Activated naive CD4-positive, alpha-beta T cell treated with anti-CD3 and anti-CD28 coated beads for 36 hours (primary cell): ENCODE measurements at regions of chr21 and their contacts with region 1.

Region 1: GRCh38 chr21:45554477-45555175 is 12.4 kb upstream of the SLC19A1 start:
- DNase-seq: peak; percentile 88
- H3K4me3 Mint-ChIP-seq: peak overlapping the region; percentile 89
- H3K27ac Mint-ChIP-seq: peak overlapping the region; percentile 91
- H3K4me1 Mint-ChIP-seq: peaks cover 27% of the 10 kb centered on the region
- H3K27me3 Mint-ChIP-seq: no peaks in the 10 kb centered on the region

Region 2: DNA sequence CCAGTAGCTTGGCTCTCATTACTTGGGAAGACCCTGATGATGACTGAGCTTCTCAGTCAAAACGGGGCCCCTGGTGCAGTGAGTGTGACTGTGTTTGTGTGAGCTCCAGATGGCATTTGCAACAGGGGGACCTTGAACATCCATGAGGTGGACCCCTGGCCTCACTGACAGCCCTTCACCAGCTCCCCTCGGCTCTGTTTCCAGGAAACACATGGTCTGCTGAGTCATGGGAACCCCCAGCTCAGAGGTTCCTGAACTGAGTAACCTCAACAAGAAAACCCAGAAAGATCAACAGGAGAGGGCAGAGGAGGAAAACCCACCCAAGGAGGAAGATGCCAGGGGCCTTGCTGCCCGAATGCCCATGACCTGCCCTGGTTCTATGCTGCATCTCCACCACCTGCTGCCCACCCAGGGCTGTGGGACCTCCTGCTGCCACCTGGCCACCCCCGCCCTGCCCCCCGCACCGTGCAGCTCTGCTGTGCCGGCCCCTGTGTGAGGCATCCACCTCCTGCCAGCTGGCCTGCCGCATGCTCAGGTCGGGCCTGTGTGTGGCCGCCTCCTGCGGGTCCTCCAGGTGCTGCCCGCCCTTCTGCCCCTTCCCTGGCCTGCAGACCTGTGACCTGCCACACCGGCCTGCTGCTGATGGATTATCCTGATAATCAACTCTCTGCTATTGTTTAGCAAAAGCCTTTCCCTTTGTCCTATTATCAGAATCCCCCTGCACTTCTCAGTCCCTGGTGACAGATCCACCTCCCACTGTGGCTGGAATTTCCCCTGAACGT is 868.4 kb before region 1 on chr21:
- CTCF ChIA-PET with region 1: no interaction called
- intact Hi-C with region 1: no loop called
- DNase-seq: peak; percentile 22
- H3K4me3 Mint-ChIP-seq: no peak overlapping the region
- H3K27ac Mint-ChIP-seq: no peak overlapping the region
- H3K4me1 Mint-ChIP-seq: peaks cover 10% of the 10 kb centered on the region
- H3K27me3 Mint-ChIP-seq: peaks cover 10% of the 10 kb centered on the region

Region 3: GRCh38 chr21:45074818-45075595 is 479.6 kb before region 1 on chr21:
- CTCF ChIA-PET with region 1: no interaction called
- intact Hi-C with region 1: loop called (anchors 2 kb)
- DNase-seq: peak; percentile 34
- H3K4me3 Mint-ChIP-seq: peak overlapping the region; percentile 84
- H3K27ac Mint-ChIP-seq: peak overlapping the region; percentile 76
- H3K4me1 Mint-ChIP-seq: peaks cover 45% of the 10 kb centered on the region
- H3K27me3 Mint-ChIP-seq: no peaks in the 10 kb centered on the region

Region 4: GRCh38 chr21:45439161-45439872 is 115.3 kb before region 1 on chr21:
- CTCF ChIA-PET with region 1: no interaction called
- intact Hi-C with region 1: no loop called
- DNase-seq: peak; percentile 90
- H3K4me3 Mint-ChIP-seq: peak overlapping the region; percentile 50
- H3K27ac Mint-ChIP-seq: no peak overlapping the region
- H3K4me1 Mint-ChIP-seq: peaks cover 3% of the 10 kb centered on the region
- H3K27me3 Mint-ChIP-seq: no peaks in the 10 kb centered on the region

Region 5: GRCh38 chr21:45478115-45478801 is 76.4 kb before region 1 on chr21:
- CTCF ChIA-PET with region 1: no interaction called
- intact Hi-C with region 1: loop called (anchors 1 kb)
- DNase-seq: peak; percentile 90
- H3K4me3 Mint-ChIP-seq: peak overlapping the region; percentile 71
- H3K27ac Mint-ChIP-seq: peak overlapping the region; percentile 94
- H3K4me1 Mint-ChIP-seq: peaks cover 30% of the 10 kb centered on the region
- H3K27me3 Mint-ChIP-seq: no peaks in the 10 kb centered on the region

Region 6: DNA sequence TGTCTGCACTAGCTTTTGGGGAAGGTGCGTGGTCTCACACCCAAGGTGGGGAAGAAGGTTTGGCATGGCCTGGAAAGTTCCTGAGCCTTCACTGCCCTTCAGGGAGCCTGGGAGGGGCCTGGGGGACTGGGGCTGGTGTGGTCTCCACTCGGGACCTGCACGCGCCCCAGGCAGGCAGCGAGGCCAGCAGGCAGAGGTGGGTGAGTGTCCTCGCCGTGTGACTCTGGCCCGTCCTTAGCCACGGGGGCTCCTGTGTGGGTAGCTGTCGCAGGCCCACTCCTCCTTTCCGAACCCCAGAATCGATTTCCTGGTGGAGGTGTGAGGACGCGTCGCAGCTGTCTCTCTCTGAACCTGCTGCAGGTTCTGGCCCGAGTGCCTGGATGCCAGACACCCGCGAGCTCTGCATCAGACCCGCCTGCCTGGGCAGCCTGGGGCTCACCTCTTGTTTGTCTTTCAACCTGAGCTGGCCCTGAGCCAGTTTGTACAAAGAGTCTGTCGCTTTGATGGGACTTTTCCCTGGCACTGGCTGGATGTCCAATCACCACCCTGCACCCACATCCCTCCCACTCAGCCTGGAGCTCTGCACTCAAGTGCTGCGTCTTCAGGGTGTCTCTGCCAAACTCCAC is 23.7 kb after region 1 on chr21:
- CTCF ChIA-PET with region 1: no interaction called
- intact Hi-C with region 1: no loop called
- DNase-seq: no peak
- H3K4me3 Mint-ChIP-seq: no peak overlapping the region
- H3K27ac Mint-ChIP-seq: no peak overlapping the region
- H3K4me1 Mint-ChIP-seq: no peaks in the 10 kb centered on the region
- H3K27me3 Mint-ChIP-seq: no peaks in the 10 kb centered on the region

Region 7: DNA sequence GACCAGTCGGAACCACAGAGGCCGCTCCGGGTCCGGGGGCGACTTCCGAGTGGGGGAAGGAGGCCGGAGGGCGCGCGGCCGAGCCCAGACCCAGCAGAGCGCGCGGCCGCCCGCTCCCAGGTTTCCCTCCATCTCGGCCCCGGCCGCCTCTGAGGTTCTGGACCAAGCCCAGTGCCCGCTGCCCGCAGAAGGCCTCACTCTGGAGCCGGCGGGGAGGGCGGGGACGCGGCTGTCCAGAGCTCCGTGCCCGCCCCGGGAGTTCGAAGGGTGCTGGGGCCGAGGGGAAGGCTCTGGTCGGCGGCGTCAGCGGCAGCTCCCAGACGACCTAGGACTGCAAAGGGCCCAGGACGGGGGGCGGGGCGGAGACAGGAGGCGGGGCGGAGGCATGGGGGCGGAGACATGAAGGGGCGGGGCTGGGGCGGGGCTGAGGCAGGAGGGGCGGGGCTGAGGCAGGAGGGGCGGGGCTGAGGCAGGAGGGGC is 35.7 kb after region 1 on chr21:
- CTCF ChIA-PET with region 1: interaction called, 17 read pairs
- intact Hi-C with region 1: loop called (anchors 1 kb)
- DNase-seq: peak; percentile 84
- H3K4me3 Mint-ChIP-seq: peak overlapping the region; percentile 52
- H3K27ac Mint-ChIP-seq: no peak overlapping the region
- H3K4me1 Mint-ChIP-seq: peaks cover 34% of the 10 kb centered on the region
- H3K27me3 Mint-ChIP-seq: peaks cover 9% of the 10 kb centered on the region

Region 8: DNA sequence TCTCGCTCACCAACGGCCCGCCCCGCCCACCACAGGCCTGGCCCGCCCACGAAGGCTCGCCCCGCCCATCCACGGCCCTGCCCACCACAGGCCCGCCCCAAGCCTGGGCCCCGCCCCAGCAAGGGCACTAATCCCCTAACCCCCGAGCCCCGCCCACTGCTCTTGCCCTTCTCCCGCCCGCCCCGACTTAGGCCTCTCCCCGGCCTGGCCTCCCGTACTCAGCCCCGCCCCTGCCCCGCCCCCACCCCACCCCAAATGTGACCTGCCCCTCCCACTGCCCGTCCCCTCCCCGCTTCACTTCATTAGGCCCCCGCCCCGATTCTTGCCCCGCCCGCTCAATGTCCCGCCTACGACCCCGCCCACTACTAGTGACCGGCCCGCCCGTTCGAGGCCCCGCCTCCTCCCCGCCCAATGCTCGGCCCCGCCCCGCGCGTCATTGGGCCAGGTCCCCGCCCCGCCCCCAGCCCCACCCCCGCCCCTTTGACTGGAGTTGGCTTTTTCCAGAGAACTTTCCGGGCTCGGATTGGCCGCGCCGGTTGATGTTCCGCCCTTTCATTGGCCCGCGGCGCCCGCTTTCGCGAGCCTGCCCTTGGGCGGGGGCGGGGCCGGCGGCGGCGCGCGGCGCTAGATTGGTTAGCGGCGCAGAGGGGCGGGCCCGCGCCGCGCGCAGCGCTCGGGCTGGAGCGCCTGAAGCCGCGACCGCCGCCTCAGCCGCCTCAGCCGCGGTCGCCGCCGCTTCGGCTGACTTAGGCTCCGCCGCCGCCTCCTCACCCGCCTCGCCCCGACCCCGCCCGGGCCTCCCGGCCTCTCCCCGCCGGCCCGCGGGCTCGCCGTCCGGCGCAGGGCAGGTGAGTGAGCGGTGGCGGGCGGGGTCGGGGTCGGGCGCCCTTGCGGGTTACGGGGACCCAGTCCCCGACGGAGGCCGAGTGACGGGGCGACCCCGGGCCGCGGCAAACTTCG is 88.7 kb after region 1 on chr21 and contains the start of gene PCBP3:
- CTCF ChIA-PET with region 1: no interaction called
- intact Hi-C with region 1: loop called (anchors 1 kb)
- DNase-seq: peak; percentile 99
- H3K4me3 Mint-ChIP-seq: peak within 1 kb of the TSS; percentile 76
- H3K27ac Mint-ChIP-seq: no peak within 1 kb of the TSS
- H3K4me1 Mint-ChIP-seq: peaks cover 46% of the 10 kb centered on the region
- H3K27me3 Mint-ChIP-seq: peaks cover 5% of the 10 kb centered on the region
- total RNA-seq, gene PCBP3: 10.0 to 10.2 TPM

Region 9: GRCh38 chr21:45768751-45769070 is 214.1 kb after region 1 on chr21:
- CTCF ChIA-PET with region 1: no interaction called
- intact Hi-C with region 1: loop called (anchors 1 kb)
- DNase-seq: peak; percentile 66
- H3K4me3 Mint-ChIP-seq: peak overlapping the region; percentile 43
- H3K27ac Mint-ChIP-seq: peak overlapping the region; percentile 95
- H3K4me1 Mint-ChIP-seq: peaks cover 46% of the 10 kb centered on the region
- H3K27me3 Mint-ChIP-seq: no peaks in the 10 kb centered on the region